IMR-90 (cell line): ENCODE measurements at regions of chr2 and their contacts with region 1.

Region 1: DNA sequence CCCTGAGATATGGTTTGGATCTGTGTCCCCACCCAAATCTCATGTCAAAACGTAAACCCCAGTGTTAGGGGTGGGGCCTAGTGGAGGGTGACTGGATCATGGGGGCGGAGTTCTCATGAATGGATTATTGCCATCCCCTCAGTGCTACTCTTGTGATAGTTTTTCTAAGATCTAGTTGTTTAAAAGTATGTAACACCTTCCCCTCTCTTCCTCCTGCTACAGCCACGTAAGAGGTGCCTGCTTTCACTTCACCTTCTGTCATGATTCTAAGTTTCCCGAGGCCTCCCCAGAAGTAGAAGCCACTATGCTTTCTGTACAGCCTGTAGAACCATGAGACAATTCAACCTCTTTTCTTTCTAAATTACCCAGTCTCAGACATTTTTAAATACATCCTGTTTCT is 16.9 kb downstream of the PUM2 start:
- DNase-seq: no peak
- ATAC-seq: no peak
- H3K4me3 ChIP-seq: no peak overlapping the region
- H3K27ac ChIP-seq: no peak overlapping the region
- H3K4me1 ChIP-seq: peaks cover 2% of the 10 kb centered on the region; the same call in 1 of the 2 replicates
- H3K27me3 ChIP-seq: no peaks in the 10 kb centered on the region
- CTCF ChIP-seq: no peak
- POLR2A ChIP-seq: no peak
- RAD21 ChIP-seq: no peak

Region 2: DNA sequence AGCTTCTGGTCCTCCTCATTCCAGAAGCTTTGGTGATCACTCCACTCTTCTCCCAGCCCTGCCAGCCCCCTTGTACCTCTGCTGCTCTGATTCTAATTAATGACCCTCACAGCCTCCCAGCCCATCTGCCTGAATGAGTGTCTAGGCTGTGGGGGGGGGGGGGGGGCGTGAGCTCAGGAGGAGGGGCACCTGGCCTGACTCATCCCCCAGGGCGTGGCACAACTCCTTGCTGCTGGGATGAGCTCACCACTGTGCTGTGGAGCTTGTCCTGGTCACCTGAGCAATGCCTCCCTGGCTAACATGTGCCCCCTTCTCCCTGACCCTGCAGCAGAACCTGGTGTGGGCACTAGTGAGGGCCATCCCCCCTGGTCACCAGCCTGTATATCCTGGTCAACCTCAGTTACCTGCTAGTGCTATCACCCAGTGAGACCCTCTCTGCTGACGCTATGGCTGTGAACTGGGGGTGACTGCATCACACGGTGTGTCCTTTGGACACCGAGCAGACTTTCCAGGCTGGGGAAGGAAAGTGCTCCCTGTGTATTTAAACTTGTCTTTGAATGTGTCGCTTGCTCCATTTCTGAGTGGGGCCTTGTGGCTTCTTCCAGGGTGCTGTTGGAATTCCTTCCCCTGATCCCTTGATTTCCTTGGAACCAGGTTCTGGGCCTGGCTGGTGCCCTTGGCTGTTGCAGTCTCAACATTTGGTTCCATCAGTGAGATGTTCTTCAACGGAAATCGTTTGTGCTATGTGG is 58.4 kb after region 1 on chr2:
- CTCF ChIA-PET with region 1: no interaction called
- POLR2A ChIA-PET with region 1: no interaction called
- dilution Hi-C with region 1: no loop called
- in situ Hi-C with region 1: no loop called
- intact Hi-C with region 1: loop called (anchors 10 kb)
- DNase-seq: no peak
- ATAC-seq: no peak
- H3K4me3 ChIP-seq: no peak overlapping the region
- H3K27ac ChIP-seq: no peak overlapping the region
- H3K4me1 ChIP-seq: no peaks in the 10 kb centered on the region
- H3K27me3 ChIP-seq: peaks cover 32% of the 10 kb centered on the region
- CTCF ChIP-seq: no peak
- POLR2A ChIP-seq: no peak
- RAD21 ChIP-seq: no peak

Region 3: GRCh38 chr2:20433249-20433648 is 99.5 kb after region 1 on chr2:
- CTCF ChIA-PET with region 1: no interaction called
- POLR2A ChIA-PET with region 1: no interaction called
- dilution Hi-C with region 1: no loop called
- in situ Hi-C with region 1: no loop called
- intact Hi-C with region 1: loop called (anchors 1 kb)
- DNase-seq: no peak
- ATAC-seq: no peak
- H3K4me3 ChIP-seq: no peak overlapping the region
- H3K27ac ChIP-seq: no peak overlapping the region
- H3K4me1 ChIP-seq: peaks cover 2% of the 10 kb centered on the region
- H3K27me3 ChIP-seq: peaks cover 4% of the 10 kb centered on the region; the same call in 1 of the 2 replicates
- CTCF ChIP-seq: no peak
- POLR2A ChIP-seq: no peak
- RAD21 ChIP-seq: no peak